Activated CD8-positive, alpha-beta memory T cell treated with anti-CD3 and anti-CD28 coated beads, Interleukin-2, amount 10 ng/mL, durations not matched to agents 7 days and 5 days (primary cell): ENCODE measurements at regions of chr22 and their contacts with region 1.

Region 1: DNA sequence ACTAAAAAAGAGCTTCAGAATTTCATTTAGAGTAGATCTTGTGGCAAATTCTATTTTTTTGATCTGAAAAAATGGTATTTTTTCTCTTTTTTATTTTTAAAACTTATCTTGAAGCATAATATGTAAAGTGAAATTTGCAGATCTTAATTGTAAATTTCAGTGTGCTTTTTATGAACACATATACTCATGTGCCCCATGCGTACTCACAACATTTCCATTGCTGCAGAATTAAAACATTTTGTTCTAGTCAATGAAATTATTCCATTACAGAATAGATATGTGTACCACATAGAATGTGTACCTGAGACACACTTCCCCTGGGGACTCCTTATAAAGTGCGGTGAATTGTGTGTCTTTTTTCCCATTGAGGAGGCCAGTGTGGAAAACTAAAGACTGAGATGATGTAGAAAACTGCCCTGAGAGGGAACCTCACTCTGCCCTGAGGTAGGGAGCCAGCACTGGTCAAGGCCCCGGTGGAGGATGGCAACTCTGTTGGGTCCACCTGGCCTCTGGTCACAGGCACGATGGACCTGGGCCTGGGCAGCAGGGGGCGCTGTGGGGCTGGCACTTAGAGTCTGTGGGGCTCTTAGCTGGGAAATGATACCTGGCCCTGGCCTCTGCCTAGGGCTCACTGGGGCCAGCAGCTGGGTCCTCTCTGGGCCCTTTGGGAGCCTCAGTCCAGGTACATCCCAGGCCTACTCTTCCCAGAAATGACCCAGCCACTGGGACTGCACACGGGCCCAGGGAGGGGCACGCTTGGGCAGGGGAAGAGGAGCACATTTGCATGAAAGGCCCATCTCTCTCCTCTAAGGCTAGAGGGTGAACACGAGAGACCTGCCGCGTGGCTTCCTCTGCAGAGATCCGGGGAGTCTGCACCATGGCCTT is 77.9 kb upstream of the TOP3B start:
- DNase-seq: peak; percentile 77
- ATAC-seq: peak; percentile 80
- H3K4me3 Mint-ChIP-seq: no peak overlapping the region
- H3K27ac Mint-ChIP-seq: no peak overlapping the region
- H3K4me1 Mint-ChIP-seq: peaks cover 2% of the 10 kb centered on the region
- H3K27me3 Mint-ChIP-seq: peaks cover 61% of the 10 kb centered on the region

Region 2: GRCh38 chr22:20583471-20583922 is 1476.9 kb before region 1 on chr22:
- CTCF ChIA-PET with region 1: no interaction called
- DNase-seq: no peak
- ATAC-seq: no peak
- H3K4me3 Mint-ChIP-seq: no peak overlapping the region
- H3K27ac Mint-ChIP-seq: no peak overlapping the region
- H3K4me1 Mint-ChIP-seq: no peaks in the 10 kb centered on the region
- H3K27me3 Mint-ChIP-seq: no peaks in the 10 kb centered on the region

Region 3: DNA sequence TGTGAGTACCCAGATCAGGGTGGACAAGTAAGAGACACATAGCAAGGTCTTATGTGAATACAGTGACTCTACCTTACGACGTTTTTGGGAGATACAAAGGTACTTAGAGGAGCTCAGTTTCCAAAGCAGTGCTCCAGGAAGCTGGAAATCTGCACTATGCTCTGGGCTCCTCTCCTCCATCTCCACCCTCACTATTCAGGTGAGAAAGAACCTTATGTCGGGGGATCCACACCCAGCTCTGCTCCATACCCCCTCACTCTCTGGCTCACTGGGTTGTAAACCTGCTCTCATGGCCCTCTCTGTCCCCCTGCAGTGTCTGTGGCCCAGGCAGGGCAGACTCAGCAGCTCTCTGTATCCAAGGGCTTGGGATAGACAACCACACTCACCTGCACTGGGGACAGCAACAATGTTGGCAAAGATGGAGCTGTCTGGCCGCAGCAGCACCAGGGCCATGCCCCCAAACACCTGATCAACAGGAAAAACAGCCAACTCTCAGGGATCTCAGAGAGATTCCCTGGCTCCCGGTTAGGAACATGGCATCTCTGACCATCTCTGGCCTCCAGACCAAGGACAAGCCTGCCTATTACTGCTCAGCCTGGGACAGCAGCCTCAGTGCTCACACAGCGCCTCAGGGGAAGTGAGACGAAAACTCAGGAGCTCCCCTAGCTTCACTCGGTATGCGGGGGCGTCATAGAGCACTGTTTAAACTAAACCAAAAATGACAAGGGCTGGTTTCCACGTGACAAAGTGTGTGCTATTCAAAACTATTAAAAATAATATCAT is 17.0 kb before region 1 on chr22:
- CTCF ChIA-PET with region 1: interaction called, 10 read pairs
- DNase-seq: no peak
- ATAC-seq: no peak
- H3K4me3 Mint-ChIP-seq: no peak overlapping the region
- H3K27ac Mint-ChIP-seq: no peak overlapping the region
- H3K4me1 Mint-ChIP-seq: no peaks in the 10 kb centered on the region
- H3K27me3 Mint-ChIP-seq: peaks cover 26% of the 10 kb centered on the region

Region 4: DNA sequence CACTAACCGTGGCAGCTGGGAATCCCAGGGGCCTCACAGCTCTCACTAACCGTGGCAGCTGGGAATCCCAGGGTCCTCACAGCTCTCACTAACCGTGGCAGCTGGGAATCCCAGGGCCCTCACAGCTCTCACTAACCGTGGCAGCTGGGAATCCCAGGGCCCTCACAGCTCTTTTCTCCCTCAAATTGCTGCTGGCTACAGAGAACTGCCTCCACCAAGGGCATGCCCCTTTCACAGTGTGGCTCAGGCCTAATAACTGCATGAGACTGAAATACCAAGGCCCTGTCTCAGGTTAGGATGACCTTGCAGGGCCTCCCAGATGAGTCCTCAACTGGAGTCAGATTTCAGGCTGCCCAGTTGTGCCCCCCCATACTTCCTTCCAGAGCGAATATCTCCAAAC is 548.8 kb after region 1 on chr22:
- CTCF ChIA-PET with region 1: no interaction called
- DNase-seq: no peak
- ATAC-seq: no peak
- H3K4me3 Mint-ChIP-seq: no peak overlapping the region
- H3K27ac Mint-ChIP-seq: no peak overlapping the region
- H3K4me1 Mint-ChIP-seq: no peaks in the 10 kb centered on the region
- H3K27me3 Mint-ChIP-seq: peaks cover 12% of the 10 kb centered on the region